Calu3 (cell line): ENCODE measurements at regions of chr18 and their contacts with region 1.

Region 1: DNA sequence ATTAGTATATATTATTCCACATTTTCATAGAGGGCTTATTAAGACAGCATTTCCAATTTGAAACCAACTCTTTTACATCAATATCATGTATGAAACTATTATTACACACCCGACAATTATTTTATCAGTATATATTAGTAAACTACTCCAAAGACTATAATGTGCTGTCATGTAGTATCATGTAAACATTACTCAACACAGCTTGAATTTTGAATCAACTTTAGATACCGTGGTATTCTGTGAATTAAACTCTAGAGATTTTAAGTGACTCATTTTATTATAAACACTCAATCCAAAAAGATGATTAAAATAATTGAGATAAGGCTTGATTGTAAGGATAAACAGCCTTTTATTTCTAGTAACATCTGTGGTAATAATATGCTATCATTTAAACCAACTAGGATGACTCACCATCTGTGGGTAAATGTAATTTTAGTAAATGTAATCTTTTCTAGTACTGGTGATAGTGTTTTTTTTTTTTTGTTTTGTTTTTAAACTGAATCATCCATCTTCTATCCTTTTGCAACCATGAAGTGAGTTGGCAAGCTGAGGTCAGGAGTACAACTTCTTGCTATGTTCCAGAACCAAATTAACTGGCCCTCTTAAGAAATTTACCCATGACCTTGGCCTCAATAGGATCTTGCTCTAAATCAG is 144.3 kb upstream of the SMAD7 start:
- DNase-seq: no peak
- H3K4me3 Mint-ChIP-seq: no peak overlapping the region
- H3K27ac Mint-ChIP-seq: no peak overlapping the region
- H3K4me1 Mint-ChIP-seq: peaks cover 18% of the 10 kb centered on the region
- H3K27me3 Mint-ChIP-seq: no peaks in the 10 kb centered on the region
- CTCF ChIP-seq: no peak

Region 2: GRCh38 chr18:48868468-48869466 is 226.3 kb before region 1 on chr18:
- CTCF ChIA-PET with region 1: no interaction called
- intact Hi-C with region 1: no loop called
- DNase-seq: peak; percentile 23
- H3K4me3 Mint-ChIP-seq: no peak overlapping the region
- H3K27ac Mint-ChIP-seq: no peak overlapping the region
- H3K4me1 Mint-ChIP-seq: peaks cover 29% of the 10 kb centered on the region
- H3K27me3 Mint-ChIP-seq: no peaks in the 10 kb centered on the region
- CTCF ChIP-seq: no peak

Region 3: DNA sequence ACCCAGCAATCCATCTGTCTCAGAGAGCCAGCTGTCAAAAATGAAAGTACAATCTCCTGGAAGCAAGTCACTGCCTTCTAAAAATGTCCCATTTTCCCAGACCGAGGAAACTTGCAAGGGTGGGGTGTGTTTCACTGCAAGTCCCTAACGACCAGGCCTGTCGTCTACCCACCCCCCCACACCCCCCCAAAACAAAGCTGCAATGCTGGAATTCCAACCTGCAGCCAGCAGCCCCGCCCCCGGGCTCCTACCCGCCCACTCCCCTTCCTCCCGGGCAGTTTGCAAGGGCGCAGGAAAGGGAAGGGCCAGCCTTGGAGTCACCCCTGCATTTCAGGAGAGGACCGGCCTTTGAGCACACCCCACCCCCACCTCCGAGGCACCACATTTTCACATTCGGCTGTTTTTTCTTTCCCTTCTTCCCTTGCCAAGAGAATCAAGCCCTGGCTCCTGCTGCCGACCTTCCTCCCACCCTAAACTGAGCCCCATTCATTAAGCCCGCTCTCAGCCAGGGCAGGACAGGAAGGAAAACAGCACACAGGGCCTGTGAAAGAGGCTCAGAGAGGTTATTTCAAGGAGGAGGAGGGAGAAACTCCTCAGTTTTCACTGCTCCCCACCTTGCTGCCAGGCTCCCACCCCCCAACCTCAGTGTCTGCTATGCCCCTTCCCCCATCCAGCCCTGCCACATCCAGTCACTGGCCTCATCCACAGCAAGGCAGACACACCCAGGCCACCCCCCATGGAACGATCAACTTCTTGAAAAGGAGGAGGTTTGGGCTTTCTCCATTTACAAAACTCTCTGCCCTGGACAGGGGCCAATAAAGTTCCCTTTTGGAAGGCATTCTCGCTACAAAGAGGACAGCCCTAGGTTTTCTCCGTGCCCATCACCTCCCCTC is 155.7 kb before region 1 on chr18:
- CTCF ChIA-PET with region 1: no interaction called
- intact Hi-C with region 1: no loop called
- DNase-seq: peak; percentile 53
- H3K4me3 Mint-ChIP-seq: peak overlapping the region; percentile 56
- H3K27ac Mint-ChIP-seq: no peak overlapping the region
- H3K4me1 Mint-ChIP-seq: peaks cover 98% of the 10 kb centered on the region
- H3K27me3 Mint-ChIP-seq: no peaks in the 10 kb centered on the region
- CTCF ChIP-seq: no peak

Region 4: GRCh38 chr18:49151482-49151881 is 56.4 kb after region 1 on chr18:
- CTCF ChIA-PET with region 1: no interaction called
- intact Hi-C with region 1: loop called (anchors 5 kb)
- DNase-seq: no peak
- H3K4me3 Mint-ChIP-seq: no peak overlapping the region
- H3K27ac Mint-ChIP-seq: no peak overlapping the region
- H3K4me1 Mint-ChIP-seq: peaks cover 29% of the 10 kb centered on the region
- H3K27me3 Mint-ChIP-seq: no peaks in the 10 kb centered on the region
- CTCF ChIP-seq: no peak